ENCODE measurements at regions of chr14 and their contacts with region 1.

Region 1: DNA sequence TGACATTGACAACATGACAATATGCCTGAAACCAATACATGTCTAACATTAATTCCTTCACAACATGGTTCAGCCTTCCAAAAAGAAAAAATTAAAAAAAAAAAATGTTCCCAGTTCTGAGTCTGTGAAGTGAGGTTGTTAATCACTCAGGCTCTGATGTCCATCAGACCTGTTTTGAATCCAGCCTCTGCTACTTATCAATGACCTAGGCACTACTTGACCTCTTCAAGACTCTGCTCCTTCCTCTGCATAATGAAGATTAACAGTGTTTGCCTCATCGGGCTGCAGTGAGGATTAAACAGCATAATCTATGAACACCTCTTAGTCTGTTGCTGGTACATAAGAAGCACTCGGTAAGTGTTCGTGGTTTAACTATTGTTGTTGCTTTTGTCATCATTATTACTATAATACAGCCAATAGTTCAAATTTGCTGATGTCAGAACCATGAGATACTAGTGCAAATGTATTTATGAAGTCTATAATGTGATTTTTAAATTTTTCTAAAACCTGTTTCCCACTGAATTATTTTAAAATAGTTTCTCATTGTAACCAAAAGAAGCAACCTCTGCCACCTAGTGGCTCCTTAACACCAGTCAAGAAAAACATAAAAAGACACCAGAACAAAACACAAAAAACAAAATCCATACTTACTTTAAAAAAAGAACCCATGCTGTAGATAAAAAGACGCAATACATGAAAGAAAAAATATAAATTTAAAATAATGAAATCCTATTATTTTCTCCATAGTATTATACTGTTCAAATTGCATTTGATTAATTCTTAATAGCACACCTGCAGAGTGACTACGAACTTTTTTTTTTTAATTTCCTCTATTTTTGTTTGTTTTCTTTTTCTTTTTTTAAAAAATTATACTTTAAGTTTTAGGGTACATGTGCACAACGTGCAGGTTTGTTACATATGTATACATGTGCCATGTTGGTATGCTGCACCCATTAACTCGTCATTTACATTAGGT is 20.3 kb upstream of the TMX1 start:
- DNase-seq: no peak
- ATAC-seq: no peak
- H3K4me3 ChIP-seq: no peak overlapping the region
- H3K27ac ChIP-seq: no peak overlapping the region
- H3K4me1 ChIP-seq: no peaks in the 10 kb centered on the region
- H3K27me3 ChIP-seq: no peaks in the 10 kb centered on the region

Region 2: GRCh38 chr14:50719911-50720759 is 499.6 kb before region 1 on chr14:
- intact Hi-C with region 1: no loop called
- DNase-seq: no peak
- ATAC-seq: no peak
- H3K4me3 ChIP-seq: no peak overlapping the region
- H3K27ac ChIP-seq: no peak overlapping the region
- H3K4me1 ChIP-seq: no peaks in the 10 kb centered on the region
- H3K27me3 ChIP-seq: no peaks in the 10 kb centered on the region

Region 3: GRCh38 chr14:50954811-50955372 is 264.9 kb before region 1 on chr14:
- intact Hi-C with region 1: loop called (anchors 10 kb)
- DNase-seq: no peak
- ATAC-seq: peak; percentile 78 to 79
- H3K4me3 ChIP-seq: no peak overlapping the region
- H3K27ac ChIP-seq: no peak overlapping the region
- H3K4me1 ChIP-seq: no peaks in the 10 kb centered on the region
- H3K27me3 ChIP-seq: no peaks in the 10 kb centered on the region